ENCODE measurements at regions of chr2 and their contacts with region 1.

Region 1: GRCh38 chr2:63861220-63861822 is 19.6 kb downstream of the UGP2 start:
- DNase-seq: no peak
- ATAC-seq: peak; percentile 76
- H3K4me3 ChIP-seq: no peak overlapping the region
- H3K27ac ChIP-seq: peak overlapping the region in 1 of 2 donors; percentile 80
- H3K4me1 ChIP-seq: peaks cover 0 to 4% of the 10 kb centered on the region in 2 donors
- H3K27me3 ChIP-seq: no peaks in the 10 kb centered on the region

Region 2: GRCh38 chr2:63588385-63589147 is 272.8 kb before region 1 on chr2 and contains the starts of genes MDH1 and WDPCP:
- intact Hi-C with region 1: loop called in 1 of 2 experiments (anchors 10 kb)
- DNase-seq: peak; percentile 96 to 97
- ATAC-seq: peak; percentile 99
- H3K4me3 ChIP-seq: peak within 1 kb of the TSS; percentile 86 to 94
- H3K27ac ChIP-seq: peak within 1 kb of the TSS; percentile 52 to 93
- H3K4me1 ChIP-seq: peaks cover 2 to 8% of the 10 kb centered on the region in 2 donors
- H3K27me3 ChIP-seq: no peaks in the 10 kb centered on the region
- total RNA-seq, gene MDH1: 84.9 to 94.8 TPM
- total RNA-seq, gene WDPCP: 20.5 to 20.8 TPM

Region 3: GRCh38 chr2:63692002-63692606 is 169.2 kb before region 1 on chr2:
- intact Hi-C with region 1: loop called (anchors 5 kb)
- DNase-seq: no peak
- ATAC-seq: no peak
- H3K4me3 ChIP-seq: no peak overlapping the region
- H3K27ac ChIP-seq: no peak overlapping the region
- H3K4me1 ChIP-seq: no peaks in the 10 kb centered on the region
- H3K27me3 ChIP-seq: no peaks in the 10 kb centered on the region

Region 4: DNA sequence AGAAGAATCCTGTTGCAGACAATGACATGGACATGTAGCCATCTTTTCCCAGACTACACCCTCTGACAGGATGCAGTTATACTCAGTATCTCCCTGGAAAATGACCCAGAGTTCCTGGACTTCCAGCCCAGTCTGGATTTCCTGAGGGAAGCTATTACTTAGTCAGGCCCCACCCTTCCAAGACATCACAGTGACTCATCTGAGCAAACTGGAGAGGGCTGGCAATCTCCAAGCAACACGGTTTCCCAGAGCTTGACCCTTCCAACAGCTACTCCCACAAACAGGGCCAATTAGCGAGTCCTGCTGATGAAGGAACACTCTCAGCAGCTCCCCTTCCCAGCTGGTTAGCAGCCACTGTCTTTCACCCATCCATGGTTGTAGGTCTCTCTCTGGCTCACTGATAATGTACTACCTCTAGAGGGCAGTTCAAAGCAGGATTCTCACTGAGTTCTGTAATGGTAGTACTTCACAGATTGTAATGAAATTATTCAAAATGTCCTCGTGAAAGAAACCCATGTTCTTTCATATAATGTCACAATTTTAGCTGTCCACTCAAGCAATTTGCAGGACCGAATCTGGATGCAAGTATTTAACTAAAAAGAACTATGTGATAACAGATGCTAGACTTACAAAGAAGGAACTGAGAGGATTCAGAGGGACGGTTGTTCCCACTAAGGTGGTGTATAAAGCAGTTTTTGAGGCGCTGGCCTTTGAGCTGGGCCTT is 162.3 kb before region 1 on chr2:
- intact Hi-C with region 1: loop called (anchors 5 kb)
- DNase-seq: peak in 1 of 2 donors; percentile 68
- ATAC-seq: peak; percentile 95
- H3K4me3 ChIP-seq: no peak overlapping the region
- H3K27ac ChIP-seq: peak overlapping the region; percentile 28 to 50
- H3K4me1 ChIP-seq: no peaks in the 10 kb centered on the region
- H3K27me3 ChIP-seq: no peaks in the 10 kb centered on the region

Region 5: DNA sequence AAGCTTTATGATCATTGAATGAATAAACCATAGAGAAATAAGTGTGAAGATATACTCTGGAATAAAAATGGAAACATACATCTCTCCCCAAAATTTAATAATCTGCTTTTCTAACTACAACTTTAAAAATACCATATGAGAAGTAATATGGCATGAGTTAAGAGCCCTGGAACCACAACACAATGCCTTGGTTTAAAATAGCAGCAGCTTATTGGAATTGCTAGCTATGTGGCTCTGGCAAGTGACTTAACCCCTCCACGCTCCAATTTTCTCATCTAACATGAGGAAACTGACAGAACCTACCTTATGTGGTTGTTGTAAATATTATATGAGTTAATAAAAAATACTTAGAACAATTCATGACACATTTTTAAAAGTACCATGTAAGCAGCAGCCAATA is 81.5 kb after region 1 on chr2:
- intact Hi-C with region 1: no loop called
- DNase-seq: no peak
- ATAC-seq: no peak
- H3K4me3 ChIP-seq: no peak overlapping the region
- H3K27ac ChIP-seq: no peak overlapping the region
- H3K4me1 ChIP-seq: no peaks in the 10 kb centered on the region
- H3K27me3 ChIP-seq: no peaks in the 10 kb centered on the region

Measured in aorta (tissue), 5 donors.